ENCODE measurements at regions of chr20 and their contacts with region 1.

Region 1: GRCh38 chr20:4613718-4614620 is 107.7 kb upstream of the PRND start:
- DNase-seq: peak; percentile 54
- ATAC-seq: peak; percentile 92
- H3K4me3 ChIP-seq: peak overlapping the region in 1 of 2 experiments; percentile 17; a peak in 1 of 4 replicates
- H3K27ac ChIP-seq: no peak overlapping the region
- H3K4me1 ChIP-seq: peaks cover 15 to 16% of the 10 kb centered on the region in 2 experiments
- H3K27me3 ChIP-seq: no peaks in the 10 kb centered on the region
- CTCF ChIP-seq: peak; percentile 60 to 90 (median 70)
- POLR2A ChIP-seq: no peak
- RAD21 ChIP-seq: peak; percentile 91

Region 2: GRCh38 chr20:4601630-4602296 is 12.2 kb before region 1 on chr20:
- CTCF ChIA-PET with region 1: interaction called, 11 read pairs
- POLR2A ChIA-PET with region 1: interaction called, 3 read pairs
- RAD21 ChIA-PET with region 1: no interaction called
- intact Hi-C with region 1: no loop called
- DNase-seq: peak; percentile 44
- ATAC-seq: peak; percentile 77
- H3K4me3 ChIP-seq: peak overlapping the region in 1 of 2 experiments; percentile 21; a peak in 1 of 4 replicates
- H3K27ac ChIP-seq: peak overlapping the region; percentile 63
- H3K4me1 ChIP-seq: peaks cover 24 to 32% of the 10 kb centered on the region in 2 experiments
- H3K27me3 ChIP-seq: no peaks in the 10 kb centered on the region
- CTCF ChIP-seq: no peak
- POLR2A ChIP-seq: no peak
- RAD21 ChIP-seq: no peak

Region 3: GRCh38 chr20:4720041-4720976 is 106.3 kb after region 1 on chr20:
- CTCF ChIA-PET with region 1: interaction called, 50 read pairs
- POLR2A ChIA-PET with region 1: no interaction called
- RAD21 ChIA-PET with region 1: interaction called, 3 to 5 read pairs
- intact Hi-C with region 1: loop called (anchors 1 kb)
- DNase-seq: peak; percentile 57
- ATAC-seq: peak; percentile 90
- H3K4me3 ChIP-seq: no peak overlapping the region
- H3K27ac ChIP-seq: no peak overlapping the region
- H3K4me1 ChIP-seq: peaks cover 0 to 7% of the 10 kb centered on the region in 2 experiments; a peak in 1 of 4 replicates
- H3K27me3 ChIP-seq: no peaks in the 10 kb centered on the region
- CTCF ChIP-seq: peak; percentile 60 to 93 (median 74)
- POLR2A ChIP-seq: no peak
- RAD21 ChIP-seq: peak; percentile 97